ENCODE measurements at regions of chr12 and their contacts with region 1.

Region 1: DNA sequence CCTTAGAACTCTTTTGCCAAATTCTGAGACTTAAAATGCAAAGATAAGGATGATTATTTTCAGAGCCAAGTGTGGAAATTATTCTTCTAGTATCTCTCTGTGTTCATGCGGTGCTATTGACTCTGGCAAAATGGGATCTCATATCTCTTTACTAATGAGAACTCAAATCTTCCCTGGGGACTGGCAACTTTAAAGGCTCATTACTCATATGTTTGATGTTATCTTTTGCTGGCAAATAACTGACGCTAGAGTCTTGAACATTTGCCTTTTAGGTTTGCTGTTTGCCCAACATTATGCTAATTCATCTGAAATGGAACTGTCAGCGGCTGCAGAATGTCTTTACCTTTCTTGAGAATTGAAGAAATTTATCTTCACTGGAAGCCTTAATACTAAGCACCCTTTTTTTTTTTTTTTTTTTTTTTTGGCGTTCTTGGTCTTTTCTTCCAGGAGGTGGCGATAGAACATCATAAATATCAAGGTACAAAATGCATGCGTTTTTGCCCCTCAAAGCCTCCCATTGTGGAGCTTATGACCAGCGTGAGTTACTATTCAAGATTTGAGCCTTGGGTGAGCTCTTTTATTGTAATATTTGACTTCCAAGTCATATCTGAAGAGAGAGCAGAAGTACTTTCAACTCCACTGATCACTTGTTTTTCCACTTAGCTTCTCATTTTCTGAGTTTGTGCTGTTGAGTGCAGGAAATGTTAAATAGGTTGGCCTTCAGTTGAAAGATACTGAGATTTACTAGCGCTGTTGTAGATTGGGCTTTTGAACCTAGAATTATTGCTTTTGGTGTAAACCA is 86.6 kb downstream of the CAND1 start:
- DNase-seq: no peak
- H3K4me3 ChIP-seq: no peak overlapping the region
- H3K27ac ChIP-seq: peak overlapping the region in 1 of 4 donors; percentile 42
- H3K4me1 ChIP-seq: peaks cover 0 to 41% (median 2%) of the 10 kb centered on the region in 4 donors
- H3K27me3 ChIP-seq: no peaks in the 10 kb centered on the region
- CTCF ChIP-seq: peak in 3 of 4 experiments; percentile 14 to 48 (median 18)
- EP300 ChIP-seq: no peak
- POLR2A ChIP-seq: no peak

Region 2: GRCh38 chr12:67441736-67442346 is 86.1 kb after region 1 on chr12:
- intact Hi-C with region 1: loop called (anchors 2 kb)
- DNase-seq: peak; percentile 90
- H3K4me3 ChIP-seq: peak overlapping the region in 1 of 4 donors; percentile 2
- H3K27ac ChIP-seq: peak overlapping the region in 1 of 4 donors; percentile 4
- H3K4me1 ChIP-seq: peaks cover 0 to 17% (median 7%) of the 10 kb centered on the region in 4 donors
- H3K27me3 ChIP-seq: no peaks in the 10 kb centered on the region
- CTCF ChIP-seq: peak; percentile 14 to 82 (median 64)
- EP300 ChIP-seq: no peak
- POLR2A ChIP-seq: no peak

Region 3: GRCh38 chr12:67943226-67943892 is 587.6 kb after region 1 on chr12:
- intact Hi-C with region 1: loop called (anchors 1 kb)
- DNase-seq: peak; percentile 80
- H3K4me3 ChIP-seq: no peak overlapping the region
- H3K27ac ChIP-seq: peak overlapping the region in 3 of 4 donors; percentile 21 to 59 (median 48)
- H3K4me1 ChIP-seq: peaks cover 0 to 41% (median 17%) of the 10 kb centered on the region in 4 donors
- H3K27me3 ChIP-seq: no peaks in the 10 kb centered on the region
- CTCF ChIP-seq: peak; percentile 30 to 78 (median 64)
- EP300 ChIP-seq: no peak
- POLR2A ChIP-seq: no peak

Region 4: DNA sequence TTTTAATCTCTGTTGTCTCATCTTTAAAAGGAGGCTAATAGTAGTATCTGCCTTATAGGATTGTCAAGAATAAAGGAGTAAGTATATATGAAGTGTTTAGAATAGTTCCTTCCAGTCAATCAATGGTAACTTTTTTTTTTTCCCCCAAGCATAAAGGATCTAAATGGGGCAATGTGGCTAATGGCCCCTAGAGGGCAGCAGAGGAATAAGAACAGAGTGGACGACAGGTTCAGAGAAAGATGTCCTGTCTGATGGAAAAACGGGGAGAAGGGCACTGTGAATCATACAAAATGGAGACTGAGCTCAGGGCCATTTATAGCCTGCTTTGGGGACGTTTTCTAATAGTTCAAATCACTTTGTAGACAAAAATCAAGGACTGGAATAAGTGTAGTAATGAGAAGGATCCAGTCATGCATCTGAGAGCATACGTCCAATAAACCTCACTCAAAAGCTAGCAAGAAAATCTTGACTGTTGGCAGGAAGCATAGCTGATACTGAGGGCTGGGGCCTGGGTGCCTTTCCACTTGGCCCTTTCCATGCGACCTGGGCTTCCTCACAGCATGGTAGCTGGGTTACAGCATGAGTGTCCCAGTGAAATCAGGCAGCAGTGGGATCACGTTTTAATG is 684.8 kb after region 1 on chr12:
- intact Hi-C with region 1: loop called (anchors 10 kb)
- DNase-seq: peak; percentile 73
- H3K4me3 ChIP-seq: no peak overlapping the region
- H3K27ac ChIP-seq: no peak overlapping the region
- H3K4me1 ChIP-seq: no peaks in the 10 kb centered on the region
- H3K27me3 ChIP-seq: no peaks in the 10 kb centered on the region
- CTCF ChIP-seq: peak; percentile 49 to 84 (median 61)
- EP300 ChIP-seq: no peak
- POLR2A ChIP-seq: no peak

Measured in sigmoid colon (tissue), 7 donors.